ENCODE measurements at regions of chr11 and their contacts with region 1.

Region 1: DNA sequence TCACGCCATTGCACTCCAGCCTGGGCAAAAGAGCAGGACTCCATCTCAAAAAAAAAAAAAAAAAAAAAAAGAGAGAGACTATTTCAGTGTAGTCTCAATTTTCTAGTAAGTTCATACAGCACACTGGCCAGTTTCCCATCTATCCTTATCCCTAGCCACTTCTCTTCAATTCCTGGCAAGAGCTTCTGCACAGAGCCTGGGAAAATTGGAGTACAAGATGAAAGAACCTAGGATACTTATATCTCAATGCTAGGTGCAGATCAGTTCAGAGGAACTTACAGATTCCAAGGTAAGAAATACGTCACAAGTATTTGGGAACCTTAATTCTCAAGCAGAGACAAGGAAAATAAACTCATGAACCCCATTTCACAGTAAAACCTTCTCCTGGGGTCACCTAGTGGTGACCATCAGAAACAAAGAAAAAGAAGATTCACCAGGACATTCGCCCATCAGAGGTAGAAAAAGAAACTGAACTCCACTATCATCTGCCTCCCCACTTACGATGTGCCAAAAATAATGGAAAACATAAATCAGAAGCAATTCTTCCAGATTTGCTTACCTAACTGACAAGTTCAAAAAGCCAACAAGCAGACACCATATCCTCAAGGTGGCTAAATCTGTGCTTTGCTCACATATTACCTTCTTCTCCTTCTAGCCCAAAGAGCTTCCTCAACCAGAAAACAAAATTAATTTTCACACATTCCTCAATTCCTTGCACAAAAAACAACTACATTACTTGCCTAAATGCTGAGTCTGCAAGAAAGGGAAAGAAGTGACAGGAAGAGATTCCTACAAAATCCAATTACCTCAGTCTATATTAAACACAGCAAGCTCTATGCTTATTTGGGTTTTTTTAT is 4.9 kb downstream of the DENND5A start:
- DNase-seq: no peak
- ATAC-seq: peak; percentile 25 to 26; a peak in 2 of 6 replicates
- H3K4me3 ChIP-seq: no peak overlapping the region
- H3K27ac ChIP-seq: no peak overlapping the region
- H3K4me1 ChIP-seq: peaks cover 27% of the 10 kb centered on the region
- CTCF ChIP-seq: peak; percentile 45
- EP300 ChIP-seq: no peak
- POLR2A ChIP-seq: no peak
- RAD21 ChIP-seq: peak in 1 of 2 experiments; percentile 38; a peak in 2 of 5 replicates

Region 2: DNA sequence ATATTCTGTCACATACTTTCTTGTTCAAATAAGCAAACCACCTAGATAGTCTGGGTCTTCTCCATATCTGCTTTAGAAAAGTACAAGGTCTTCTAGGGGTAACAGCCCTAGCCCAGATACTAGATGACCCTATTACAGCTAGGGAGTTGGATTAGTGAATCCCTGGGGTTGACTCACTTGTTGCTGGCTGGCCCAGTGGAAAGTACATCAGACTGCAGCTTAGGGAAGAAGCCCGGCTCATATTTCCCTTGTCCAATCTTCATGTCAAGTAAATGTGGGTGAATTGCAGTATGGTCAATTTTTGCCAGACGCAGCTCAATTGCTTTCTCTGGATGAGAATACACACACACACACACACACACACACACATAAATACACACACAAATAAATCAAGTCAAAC is 89.8 kb before region 1 on chr11:
- CTCF ChIA-PET with region 1: interaction called, 16 read pairs
- POLR2A ChIA-PET with region 1: no interaction called
- DNase-seq: peak in 1 of 2 experiments; percentile 5
- ATAC-seq: peak in 1 of 2 experiments; percentile 44; a peak in 2 of 6 replicates
- H3K4me3 ChIP-seq: no peak overlapping the region
- H3K27ac ChIP-seq: no peak overlapping the region
- H3K4me1 ChIP-seq: peaks cover 5% of the 10 kb centered on the region; the same call in 2 of the 3 replicates
- CTCF ChIP-seq: no peak
- EP300 ChIP-seq: no peak
- POLR2A ChIP-seq: no peak
- RAD21 ChIP-seq: no peak

Region 3: DNA sequence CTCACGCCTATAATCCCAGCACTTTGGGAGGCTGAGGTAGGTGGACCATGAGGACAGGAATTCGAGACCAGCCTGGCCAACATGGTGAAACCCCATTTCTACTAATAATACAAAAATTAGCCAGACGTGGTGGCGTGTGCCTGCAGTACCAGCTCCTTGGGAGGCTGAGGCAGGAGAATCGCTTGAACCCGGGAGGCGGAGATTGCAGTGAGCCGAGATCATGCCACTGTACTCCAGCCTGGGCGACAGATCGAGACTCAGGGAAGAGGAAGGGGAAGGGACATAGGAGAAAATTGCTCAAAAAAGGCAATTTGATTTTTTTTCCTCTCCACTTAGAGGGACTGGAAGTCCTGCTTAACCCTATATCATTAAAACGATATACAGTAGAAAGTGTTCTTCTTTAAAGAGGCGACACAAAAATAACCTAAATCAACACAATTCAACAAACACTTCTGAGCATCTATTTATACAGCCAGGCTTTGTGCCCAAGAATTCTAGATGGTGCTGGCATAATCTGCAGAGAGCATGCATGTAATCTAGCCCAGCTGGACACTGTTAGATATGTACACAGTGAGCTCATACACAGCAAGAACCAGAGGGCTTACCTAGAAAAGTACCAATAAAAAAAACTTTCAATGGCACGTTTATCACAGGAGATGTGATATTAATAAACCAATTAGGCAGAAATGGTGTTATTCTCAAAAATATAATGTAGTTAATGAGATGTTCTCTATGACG is 25.8 kb after region 1 on chr11:
- CTCF ChIA-PET with region 1: no interaction called
- POLR2A ChIA-PET with region 1: no interaction called
- DNase-seq: no peak
- ATAC-seq: peak; percentile 55 to 62; a peak in 2 of 6 replicates
- H3K4me3 ChIP-seq: no peak overlapping the region
- H3K27ac ChIP-seq: no peak overlapping the region
- H3K4me1 ChIP-seq: no peaks in the 10 kb centered on the region
- CTCF ChIP-seq: no peak
- EP300 ChIP-seq: no peak
- POLR2A ChIP-seq: no peak
- RAD21 ChIP-seq: no peak

Measured in A549 (cell line).